SK-N-SH (cell line): ENCODE measurements at regions of chr16 and their contacts with region 1.

Region 1: DNA sequence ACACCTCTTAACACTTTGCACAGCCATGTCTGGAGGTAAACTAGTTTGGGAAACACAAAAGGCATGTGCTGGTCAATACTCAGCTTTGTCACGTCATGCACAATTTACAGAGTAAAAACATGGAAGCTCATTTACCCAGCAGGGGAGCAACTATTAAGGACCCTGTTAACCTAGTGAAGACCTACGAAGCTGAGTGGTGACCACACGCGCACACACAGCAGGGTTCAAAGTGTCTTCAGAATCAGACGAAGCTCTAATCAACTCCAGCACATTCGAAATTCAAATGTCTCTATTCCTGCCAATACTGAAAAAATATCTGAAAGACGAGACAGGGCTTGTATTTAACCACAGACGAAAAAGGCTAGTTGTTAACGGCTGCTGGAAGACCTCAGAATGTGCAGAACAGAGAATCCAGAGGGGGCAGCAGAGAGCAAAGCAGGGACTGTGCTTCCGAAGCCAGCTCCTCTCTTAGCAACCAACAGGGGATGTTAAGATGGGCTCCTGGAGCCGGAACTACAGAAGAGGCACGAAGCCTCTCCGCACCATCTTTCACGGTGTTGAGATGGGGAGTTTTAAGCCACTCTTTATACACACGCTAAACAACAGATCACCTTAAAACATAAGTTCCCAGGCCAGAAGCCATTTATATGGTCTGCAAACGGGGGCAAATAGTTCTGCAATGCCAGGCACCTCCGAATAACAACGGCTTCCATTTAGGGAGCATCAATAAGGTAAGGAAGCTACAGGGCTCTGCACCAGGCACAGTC is 45.7 kb downstream of the CMTM4 start:
- DNase-seq: peak; percentile 83
- H3K4me3 ChIP-seq: peak overlapping the region; percentile 38 to 46
- H3K27ac ChIP-seq: peak overlapping the region in 1 of 2 experiments; percentile 18; a peak in 1 of 4 replicates
- H3K4me1 ChIP-seq: peaks cover 4 to 6% of the 10 kb centered on the region in 2 experiments; a peak in 1 of 4 replicates
- H3K27me3 ChIP-seq: no peaks in the 10 kb centered on the region
- CTCF ChIP-seq: peak; percentile 94
- EP300 ChIP-seq: no peak
- RAD21 ChIP-seq: peak; percentile 71

Region 2: GRCh38 chr16:66618588-66619375 is 32.1 kb before region 1 on chr16:
- CTCF ChIA-PET with region 1: interaction called, 11 read pairs
- POLR2A ChIA-PET with region 1: no interaction called
- DNase-seq: no peak
- H3K4me3 ChIP-seq: no peak overlapping the region
- H3K27ac ChIP-seq: peak overlapping the region; percentile 60 to 84
- H3K4me1 ChIP-seq: peaks cover 18 to 41% of the 10 kb centered on the region in 2 experiments
- H3K27me3 ChIP-seq: no peaks in the 10 kb centered on the region
- CTCF ChIP-seq: no peak
- EP300 ChIP-seq: peak in 1 of 2 experiments; percentile 65; a peak in 1 of 4 replicates
- RAD21 ChIP-seq: no peak

Region 3: GRCh38 chr16:66668777-66669444 is 18.0 kb after region 1 on chr16:
- CTCF ChIA-PET with region 1: interaction called, 59 read pairs
- POLR2A ChIA-PET with region 1: no interaction called
- DNase-seq: no peak
- H3K4me3 ChIP-seq: no peak overlapping the region
- H3K27ac ChIP-seq: peak overlapping the region in 1 of 2 experiments; percentile 56; a peak in 2 of 4 replicates
- H3K4me1 ChIP-seq: no peaks in the 10 kb centered on the region
- H3K27me3 ChIP-seq: no peaks in the 10 kb centered on the region
- CTCF ChIP-seq: no peak
- EP300 ChIP-seq: peak in 1 of 2 experiments; percentile 26; a peak in 1 of 4 replicates
- RAD21 ChIP-seq: no peak

Region 4: DNA sequence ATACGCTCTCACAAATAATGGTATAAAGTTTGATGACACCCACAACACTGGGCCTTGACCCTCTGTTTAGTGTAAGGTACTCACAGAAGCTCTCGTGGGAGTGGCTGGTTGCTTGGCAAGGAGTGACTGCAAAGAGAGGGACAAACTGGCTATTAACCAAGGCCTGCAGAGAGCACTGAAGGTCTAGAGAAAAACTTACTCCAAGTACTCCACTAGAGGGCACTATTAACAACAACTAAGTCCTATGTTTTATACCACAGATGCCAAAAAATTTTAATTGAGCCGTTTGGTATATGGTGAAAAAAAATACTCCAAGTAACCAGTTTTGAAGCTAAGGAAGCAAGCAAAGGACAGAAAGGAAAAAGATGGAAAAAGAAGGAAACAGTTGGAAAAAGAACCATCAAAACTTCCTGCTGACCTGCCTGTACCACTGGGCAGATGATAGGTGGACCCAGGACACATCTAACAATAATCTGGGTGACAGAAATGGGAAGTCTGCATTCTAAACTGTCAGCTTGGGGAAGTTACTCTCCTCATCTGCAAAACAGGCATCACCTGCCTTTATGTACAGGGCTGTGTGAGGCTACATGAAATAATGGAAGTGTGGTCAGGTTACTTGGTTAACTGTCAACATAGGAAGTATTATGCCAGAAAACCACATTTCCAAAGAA is 77.4 kb after region 1 on chr16:
- CTCF ChIA-PET with region 1: interaction called, 15 read pairs
- POLR2A ChIA-PET with region 1: no interaction called
- DNase-seq: peak; percentile 59
- H3K4me3 ChIP-seq: no peak overlapping the region
- H3K27ac ChIP-seq: peak overlapping the region in 1 of 2 experiments; percentile 30; a peak in 1 of 4 replicates
- H3K4me1 ChIP-seq: no peaks in the 10 kb centered on the region
- H3K27me3 ChIP-seq: no peaks in the 10 kb centered on the region
- CTCF ChIP-seq: peak; percentile 75
- EP300 ChIP-seq: no peak
- RAD21 ChIP-seq: peak; percentile 63

Region 5: DNA sequence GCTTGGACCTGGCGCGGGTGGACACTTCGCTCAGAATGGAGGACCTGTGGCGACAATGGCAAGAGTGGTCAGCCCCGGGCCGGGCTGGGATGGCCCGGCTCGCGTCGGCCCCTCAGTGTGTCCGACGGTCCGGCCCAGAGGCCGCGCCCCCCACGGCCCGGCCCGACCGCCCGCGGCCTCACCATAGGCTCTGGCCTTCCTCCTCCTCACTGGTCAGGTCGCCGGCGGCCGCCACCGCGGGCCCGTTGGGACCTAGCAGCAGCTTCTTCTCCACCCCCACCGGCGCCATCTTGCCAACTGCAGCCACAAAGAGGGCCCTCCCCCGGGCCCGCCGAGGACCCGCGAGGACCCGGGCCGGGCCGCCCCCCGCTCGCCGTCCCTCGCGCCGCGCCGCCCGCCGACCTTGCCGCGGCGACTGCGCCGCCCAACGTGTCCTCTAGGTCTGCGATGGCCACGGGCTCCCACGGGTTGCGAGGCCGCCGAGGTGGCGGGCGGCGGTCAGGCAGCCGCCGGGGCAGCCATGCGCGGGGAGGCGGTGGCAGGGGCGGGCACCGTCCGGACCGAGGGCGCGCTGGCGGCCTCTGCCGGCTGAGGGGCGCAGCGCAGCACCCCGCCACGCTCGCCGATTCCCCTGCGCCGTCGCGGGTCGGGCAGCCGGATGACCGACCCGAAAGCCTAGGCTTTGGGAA is 100.6 kb after region 1 on chr16 and contains the start of gene DYNC1LI2:
- CTCF ChIA-PET with region 1: interaction called, 12 read pairs
- POLR2A ChIA-PET with region 1: no interaction called
- DNase-seq: peak; percentile 98
- H3K4me3 ChIP-seq: peak within 1 kb of the TSS; percentile 87 to 91
- H3K27ac ChIP-seq: peak within 1 kb of the TSS; percentile 75 to 92
- H3K4me1 ChIP-seq: peaks cover 15 to 17% of the 10 kb centered on the region in 2 experiments; a peak in 2 of 4 replicates
- H3K27me3 ChIP-seq: no peaks in the 10 kb centered on the region
- CTCF ChIP-seq: peak; percentile 65
- EP300 ChIP-seq: 0 out of 4 replicates have a peak, but pooled peaks of 1 of the 2 experiments have one; percentile 6
- RAD21 ChIP-seq: peak; percentile 40; the same call in 1 of the 2 replicates
- polyA plus RNA-seq, gene DYNC1LI2: 33.1 and 49.6 TPM in 2 replicates

Region 6: GRCh38 chr16:67561824-67562525 is 911.1 kb after region 1 on chr16:
- CTCF ChIA-PET with region 1: no interaction called
- POLR2A ChIA-PET with region 1: no interaction called
- DNase-seq: peak; percentile 98
- H3K4me3 ChIP-seq: peak overlapping the region; percentile 73 to 75
- H3K27ac ChIP-seq: peak overlapping the region; percentile 96
- H3K4me1 ChIP-seq: peaks cover 0 to 13% of the 10 kb centered on the region in 2 experiments; a peak in 2 of 4 replicates
- H3K27me3 ChIP-seq: no peaks in the 10 kb centered on the region
- CTCF ChIP-seq: no peak
- EP300 ChIP-seq: peak in 1 of 2 experiments; percentile 9; a peak in 1 of 4 replicates
- RAD21 ChIP-seq: no peak